ENCODE measurements at regions of chrX and their contacts with region 1.

Region 1: DNA sequence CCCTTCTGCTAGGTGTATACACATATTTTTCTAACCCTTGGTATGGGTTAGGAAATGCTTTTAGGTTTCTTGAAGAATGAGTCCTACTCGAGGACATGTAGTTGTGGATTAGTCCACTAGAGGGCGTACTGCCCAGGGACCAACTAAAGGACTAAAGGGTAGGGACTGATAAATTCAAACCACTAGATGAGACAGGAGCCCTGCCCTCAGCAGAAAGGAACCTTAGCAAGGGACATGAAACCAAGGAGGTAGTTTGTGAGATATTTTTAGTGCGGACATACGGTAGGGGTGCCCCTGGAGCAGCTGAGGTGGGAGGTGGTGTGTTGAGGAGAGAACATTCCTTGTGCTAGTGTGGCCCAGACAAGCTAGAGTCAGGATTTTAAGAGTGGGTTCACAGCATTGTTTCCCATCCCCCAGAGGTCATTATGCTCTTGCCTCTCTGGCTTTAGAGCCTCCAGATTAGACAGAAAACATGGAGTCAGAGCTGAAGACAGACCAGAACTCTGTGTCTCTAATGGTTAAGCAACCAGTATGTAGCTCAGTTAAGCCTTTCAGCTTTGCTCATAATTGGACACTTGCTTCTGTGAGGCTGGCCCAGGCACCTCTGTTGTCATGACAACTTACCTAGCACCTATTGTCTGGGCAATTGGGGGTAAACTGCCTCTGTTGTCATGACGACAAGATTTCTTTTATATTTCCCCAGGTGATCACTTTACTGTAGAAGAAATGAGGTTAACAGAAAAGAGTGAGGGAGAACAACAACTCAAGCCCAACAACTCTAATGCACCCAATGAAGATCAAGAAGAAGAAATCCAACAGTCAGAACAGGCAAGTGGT is 1.0 kb downstream of the TMEM31 start:
- DNase-seq: peak; percentile 32
- H3K4me3 Mint-ChIP-seq: no peak overlapping the region
- H3K27ac Mint-ChIP-seq: no peak overlapping the region
- H3K4me1 Mint-ChIP-seq: peaks cover 2% of the 10 kb centered on the region
- H3K27me3 Mint-ChIP-seq: peaks cover 3% of the 10 kb centered on the region

Region 2: DNA sequence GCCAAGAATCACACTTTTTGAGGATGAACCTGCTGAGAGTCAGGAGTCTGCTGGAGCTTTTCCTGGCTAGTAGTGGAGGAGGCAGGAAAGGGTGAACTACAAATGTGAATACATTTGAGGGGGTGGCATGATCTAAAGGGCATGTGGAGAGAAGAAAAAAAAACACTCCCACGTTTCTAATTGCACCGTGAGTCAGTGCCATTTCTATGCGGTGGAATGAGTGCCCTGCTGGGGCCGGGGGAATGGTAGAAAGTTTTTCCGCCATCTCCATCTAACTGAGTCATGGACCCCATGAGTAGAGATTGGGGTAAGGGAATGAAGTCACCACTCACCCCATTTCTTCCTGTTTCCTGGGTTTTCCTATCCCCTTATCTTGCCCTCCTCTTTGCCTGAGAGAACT is 315.6 kb before region 1 on chrX:
- intact Hi-C with region 1: no loop called
- DNase-seq: no peak
- H3K4me3 Mint-ChIP-seq: no peak overlapping the region
- H3K27ac Mint-ChIP-seq: no peak overlapping the region
- H3K4me1 Mint-ChIP-seq: peaks cover 3% of the 10 kb centered on the region
- H3K27me3 Mint-ChIP-seq: no peaks in the 10 kb centered on the region

Region 3: GRCh38 chrX:103774070-103774642 is 62.4 kb after region 1 on chrX:
- intact Hi-C with region 1: loop called (anchors 5 kb)
- DNase-seq: no peak
- H3K4me3 Mint-ChIP-seq: no peak overlapping the region
- H3K27ac Mint-ChIP-seq: no peak overlapping the region
- H3K4me1 Mint-ChIP-seq: no peaks in the 10 kb centered on the region
- H3K27me3 Mint-ChIP-seq: peaks cover 3% of the 10 kb centered on the region

Region 4: GRCh38 chrX:103817502-103817901 is 105.8 kb after region 1 on chrX:
- intact Hi-C with region 1: loop called (anchors 2 kb)
- DNase-seq: no peak
- H3K4me3 Mint-ChIP-seq: no peak overlapping the region
- H3K27ac Mint-ChIP-seq: no peak overlapping the region
- H3K4me1 Mint-ChIP-seq: peaks cover 7% of the 10 kb centered on the region
- H3K27me3 Mint-ChIP-seq: peaks cover 22% of the 10 kb centered on the region

Region 5: GRCh38 chrX:104007242-104007641 is 295.5 kb after region 1 on chrX:
- intact Hi-C with region 1: no loop called
- DNase-seq: no peak
- H3K4me3 Mint-ChIP-seq: no peak overlapping the region
- H3K27ac Mint-ChIP-seq: no peak overlapping the region
- H3K4me1 Mint-ChIP-seq: no peaks in the 10 kb centered on the region
- H3K27me3 Mint-ChIP-seq: no peaks in the 10 kb centered on the region

Measured in activated T-helper 2 cell treated with anti-CD3 and anti-CD28 coated beads, Interferon-gamma antibody, Interleukin-2, Interleukin-4, amounts not matched to agents 10 μg/mL and 5 μg/mL and 100 μg/mL, durations not matched to agents 14 hours and 24 hours and 36 hours (primary cell).